Activated CD8-positive, alpha-beta T cell treated with anti-CD3 and anti-CD28 coated beads for 36 hours (primary cell): ENCODE measurements at regions of chr20 and their contacts with region 1.

Region 1: GRCh38 chr20:46022411-46023147 is 6.4 kb upstream of the SLC12A5 start:
- DNase-seq: peak; percentile 83
- ATAC-seq: peak; percentile 68
- H3K4me3 Mint-ChIP-seq: peak overlapping the region; percentile 67
- H3K27ac Mint-ChIP-seq: no peak overlapping the region
- H3K4me1 Mint-ChIP-seq: peaks cover 6% of the 10 kb centered on the region
- H3K27me3 Mint-ChIP-seq: peaks cover 32% of the 10 kb centered on the region
- CTCF ChIP-seq: peak; percentile 82

Region 2: DNA sequence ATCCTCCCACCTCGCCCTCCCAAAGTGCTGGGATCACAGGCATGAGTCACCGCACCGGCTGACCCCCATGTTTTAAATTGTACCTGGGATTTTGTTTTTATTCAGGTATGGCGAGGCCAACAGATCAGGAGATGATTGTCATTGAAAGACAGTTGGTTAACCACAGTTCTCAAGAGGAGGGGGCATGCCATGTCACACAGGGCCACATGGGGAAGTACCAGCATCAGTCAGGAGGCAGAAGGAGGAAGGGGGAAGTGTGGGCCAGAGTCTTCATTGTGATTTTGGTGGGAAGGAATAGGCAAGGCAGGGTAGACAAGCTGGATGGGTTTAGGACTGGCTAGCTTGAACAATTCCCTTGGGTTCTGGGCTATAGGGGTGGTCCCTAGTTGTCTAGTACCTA is 23.8 kb before region 1 on chr20:
- CTCF ChIA-PET with region 1: interaction called, 12 read pairs
- POLR2A ChIA-PET with region 1: no interaction called
- intact Hi-C with region 1: no loop called
- DNase-seq: peak; percentile 63
- ATAC-seq: peak; percentile 85
- H3K4me3 Mint-ChIP-seq: no peak overlapping the region
- H3K27ac Mint-ChIP-seq: peak overlapping the region; percentile 2
- H3K4me1 Mint-ChIP-seq: peaks cover 52% of the 10 kb centered on the region
- H3K27me3 Mint-ChIP-seq: peaks cover 13% of the 10 kb centered on the region
- CTCF ChIP-seq: no peak

Region 3: DNA sequence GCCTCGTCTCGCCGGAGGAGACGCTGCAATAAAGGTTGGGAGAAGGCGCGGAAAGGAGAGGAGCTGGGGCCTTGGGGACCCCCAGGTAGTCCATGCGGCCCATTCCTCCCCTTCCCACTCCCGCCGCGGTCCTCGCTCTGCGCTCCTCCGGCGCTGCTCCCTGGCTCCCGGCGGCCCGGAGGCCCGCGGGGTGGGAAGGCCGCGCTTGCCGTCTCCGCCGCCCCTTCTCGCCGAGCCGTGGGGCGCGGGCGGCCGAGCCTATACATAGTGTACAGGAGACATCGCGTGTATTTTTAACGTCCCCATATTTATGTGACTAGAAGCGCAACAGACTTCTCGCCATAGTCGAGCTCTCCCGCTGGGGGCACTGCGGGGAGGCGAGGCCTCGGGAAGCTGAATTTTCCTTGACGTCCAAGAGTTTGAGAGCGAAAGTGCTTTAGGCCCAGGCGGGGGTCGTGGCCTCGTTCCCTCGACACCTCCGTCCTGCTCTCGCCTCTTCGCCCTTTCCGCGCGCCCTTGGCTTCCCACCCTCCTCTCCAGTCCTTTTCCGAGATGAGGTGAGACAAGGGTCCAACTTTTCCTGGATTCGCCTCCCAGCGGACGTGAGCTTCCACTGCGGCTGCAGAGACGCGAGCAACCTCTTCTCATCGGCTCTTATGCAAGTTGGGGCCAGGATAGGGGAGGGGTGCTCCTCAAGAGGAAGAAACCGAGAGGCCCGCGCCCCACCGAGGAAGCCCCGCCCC is 35.4 kb after region 1 on chr20:
- CTCF ChIA-PET with region 1: interaction called, 10 read pairs
- POLR2A ChIA-PET with region 1: no interaction called
- intact Hi-C with region 1: loop called (anchors 5 kb)
- DNase-seq: peak; percentile 33
- ATAC-seq: no peak
- H3K4me3 Mint-ChIP-seq: no peak overlapping the region
- H3K27ac Mint-ChIP-seq: no peak overlapping the region
- H3K4me1 Mint-ChIP-seq: peaks cover 50% of the 10 kb centered on the region
- H3K27me3 Mint-ChIP-seq: peaks cover 34% of the 10 kb centered on the region
- CTCF ChIP-seq: no peak

Region 4: DNA sequence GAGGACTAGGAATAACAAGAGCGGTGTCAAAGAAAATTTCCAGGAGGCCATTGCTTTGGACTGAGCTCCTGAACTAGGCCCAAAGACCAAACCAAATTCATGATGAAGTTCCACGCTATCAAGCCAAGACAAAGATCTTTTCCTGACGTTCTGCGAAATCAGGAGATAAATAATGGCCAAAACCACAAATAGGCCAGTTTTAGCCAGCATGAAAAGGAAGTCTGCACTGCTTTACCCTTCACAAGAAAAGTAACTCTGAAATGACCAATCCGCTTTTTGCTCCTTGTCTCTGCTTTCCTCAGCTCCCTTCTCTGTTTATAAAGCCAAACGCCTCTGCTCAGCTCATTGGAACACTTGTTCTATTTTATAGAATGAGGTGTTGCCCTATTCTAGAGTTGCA is 60.5 kb after region 1 on chr20:
- CTCF ChIA-PET with region 1: interaction called, 13 read pairs
- POLR2A ChIA-PET with region 1: no interaction called
- intact Hi-C with region 1: loop called (anchors 5 kb)
- DNase-seq: no peak
- ATAC-seq: no peak
- H3K4me3 Mint-ChIP-seq: no peak overlapping the region
- H3K27ac Mint-ChIP-seq: no peak overlapping the region
- H3K4me1 Mint-ChIP-seq: peaks cover 58% of the 10 kb centered on the region
- H3K27me3 Mint-ChIP-seq: no peaks in the 10 kb centered on the region
- CTCF ChIP-seq: no peak

Region 5: DNA sequence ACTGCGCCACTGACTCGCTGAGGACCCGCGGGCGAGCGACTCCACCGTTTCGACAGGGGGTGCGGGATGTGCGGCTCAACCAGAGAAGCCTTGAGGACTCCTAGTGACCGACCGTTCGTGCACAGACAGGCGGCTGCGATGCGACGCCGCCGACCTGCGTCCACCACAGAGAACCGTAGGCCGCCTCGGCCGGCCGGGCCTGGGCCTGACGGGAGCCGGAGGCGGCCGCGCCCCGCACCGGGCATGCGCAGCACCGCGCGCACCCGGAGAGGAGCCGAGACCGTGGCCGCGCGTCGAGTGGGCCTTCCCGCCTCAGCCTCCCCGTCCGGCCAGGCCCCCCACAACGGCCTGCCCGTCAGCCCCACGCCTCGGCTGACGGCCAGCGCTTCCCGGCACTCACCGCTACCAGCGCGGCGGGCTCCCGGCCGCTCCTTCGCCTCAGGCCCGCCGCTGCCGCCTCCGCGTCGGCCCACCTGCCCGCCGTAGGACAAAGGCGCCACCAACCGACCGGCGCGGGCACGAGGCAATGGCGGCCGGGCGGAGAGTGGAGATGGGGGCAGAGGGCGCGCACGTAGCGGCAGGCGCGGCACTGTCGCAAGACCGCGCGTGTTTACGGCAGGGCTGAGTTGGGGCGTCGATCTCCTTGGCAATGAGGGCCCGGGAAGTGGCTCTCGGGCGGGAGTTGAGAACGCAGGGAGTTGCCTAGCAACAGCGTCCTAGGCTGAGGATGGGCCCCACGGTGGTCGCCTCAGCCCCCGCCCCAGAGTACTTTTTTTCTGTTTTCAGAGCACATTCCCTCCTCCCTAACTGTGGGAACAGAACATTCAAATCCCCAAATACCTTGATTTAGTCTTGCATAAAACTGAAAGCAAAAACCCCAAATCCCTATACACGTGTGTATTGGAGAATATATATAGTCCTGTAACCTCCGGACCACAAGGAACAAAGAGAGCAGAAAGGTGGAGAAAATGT is 67.1 kb after region 1 on chr20 and contains the start of gene NCOA5:
- CTCF ChIA-PET with region 1: interaction called, 13 read pairs
- POLR2A ChIA-PET with region 1: no interaction called
- intact Hi-C with region 1: loop called (anchors 5 kb)
- DNase-seq: peak; percentile 96
- ATAC-seq: peak; percentile 93
- H3K4me3 Mint-ChIP-seq: peak within 1 kb of the TSS; percentile 79
- H3K27ac Mint-ChIP-seq: peak within 1 kb of the TSS; percentile 88
- H3K4me1 Mint-ChIP-seq: peaks cover 46% of the 10 kb centered on the region
- H3K27me3 Mint-ChIP-seq: no peaks in the 10 kb centered on the region
- CTCF ChIP-seq: peak; percentile 42
- total RNA-seq, gene NCOA5: 13.1 to 16.8 TPM

Region 6: GRCh38 chr20:46174469-46175128 is 152.0 kb after region 1 on chr20:
- CTCF ChIA-PET with region 1: interaction called, 10 read pairs
- POLR2A ChIA-PET with region 1: no interaction called
- intact Hi-C with region 1: loop called (anchors 5 kb)
- DNase-seq: peak; percentile 84
- ATAC-seq: peak; percentile 98
- H3K4me3 Mint-ChIP-seq: no peak overlapping the region
- H3K27ac Mint-ChIP-seq: no peak overlapping the region
- H3K4me1 Mint-ChIP-seq: no peaks in the 10 kb centered on the region
- H3K27me3 Mint-ChIP-seq: peaks cover 41% of the 10 kb centered on the region
- CTCF ChIP-seq: peak; percentile 69